Body of pancreas (tissue), 4 donors: ENCODE measurements at regions of chr11 and their contacts with region 1.

Region 1: DNA sequence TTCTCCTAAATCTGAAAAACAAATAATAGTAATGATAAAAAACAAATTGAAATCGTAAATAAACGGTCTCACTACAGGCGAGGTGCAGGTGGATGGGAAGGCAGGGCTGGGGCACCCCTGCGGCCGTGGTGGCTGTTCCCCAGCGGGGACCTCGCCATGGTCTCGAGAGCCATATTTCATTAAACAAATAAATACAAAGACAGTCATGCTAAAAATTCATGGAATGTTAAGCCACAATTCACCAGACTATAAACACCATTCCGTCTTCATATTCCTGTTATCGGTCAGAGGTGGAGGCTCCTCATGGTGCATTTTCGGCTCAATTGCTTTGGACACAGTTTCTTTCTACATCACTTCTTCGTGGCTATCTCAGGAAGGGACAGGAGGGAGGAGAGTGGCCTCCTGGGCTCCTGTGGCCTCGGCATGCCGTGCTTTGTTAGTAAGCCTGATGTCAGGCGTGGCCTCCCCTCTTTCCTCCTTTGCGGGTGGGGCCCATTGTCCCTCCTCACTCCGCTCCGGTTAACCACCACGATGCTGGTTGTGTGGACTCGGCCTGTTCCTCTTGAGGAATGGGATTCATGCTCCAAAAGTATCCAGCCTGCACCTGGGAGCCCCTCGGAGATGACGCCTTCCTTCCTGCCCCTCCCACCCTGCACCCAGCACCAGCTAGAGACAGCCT is 16.1 kb upstream of the BRSK2 start:
- DNase-seq: no peak
- ATAC-seq: no peak
- H3K4me3 ChIP-seq: no peak overlapping the region
- H3K27ac ChIP-seq: no peak overlapping the region
- H3K4me1 ChIP-seq: no peaks in the 10 kb centered on the region
- H3K27me3 ChIP-seq: no peaks in the 10 kb centered on the region
- CTCF ChIP-seq: no peak
- POLR2A ChIP-seq: no peak

Region 2: DNA sequence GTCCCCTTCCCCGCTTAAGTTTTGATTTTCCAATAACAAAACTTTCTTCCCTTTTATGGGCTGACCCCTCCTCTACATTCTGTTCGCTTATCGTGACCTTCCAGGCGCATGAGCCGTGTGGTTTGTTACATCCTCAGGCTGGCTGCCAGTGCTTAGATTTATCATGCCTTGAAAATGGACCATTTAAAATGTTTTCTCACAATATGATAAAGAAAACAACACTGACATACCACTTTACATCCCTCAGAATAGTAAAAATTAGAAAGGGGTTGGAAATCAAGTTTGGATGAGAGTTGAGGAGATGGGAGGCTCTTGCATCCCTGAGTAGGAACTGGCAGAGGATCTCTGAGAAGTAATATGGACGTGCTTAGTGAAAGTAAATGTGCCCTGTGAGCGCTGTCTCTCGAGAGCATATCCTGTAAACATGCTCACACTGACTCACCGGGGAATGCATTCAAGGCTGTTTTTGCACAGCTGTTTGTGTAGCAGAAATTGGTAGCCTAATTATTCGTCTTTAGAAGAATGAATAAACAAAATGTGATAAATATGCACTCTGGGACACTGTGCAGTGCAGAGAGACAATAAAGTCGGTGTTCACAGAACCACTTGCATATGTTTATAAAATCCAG is 47.1 kb before region 1 on chr11:
- intact Hi-C with region 1: loop called (anchors 5 kb)
- DNase-seq: no peak
- ATAC-seq: no peak
- H3K4me3 ChIP-seq: no peak overlapping the region
- H3K27ac ChIP-seq: no peak overlapping the region
- H3K4me1 ChIP-seq: no peaks in the 10 kb centered on the region
- H3K27me3 ChIP-seq: no peaks in the 10 kb centered on the region
- CTCF ChIP-seq: no peak
- POLR2A ChIP-seq: no peak